ENCODE measurements at regions of chr14 and their contacts with region 1.

Region 1: DNA sequence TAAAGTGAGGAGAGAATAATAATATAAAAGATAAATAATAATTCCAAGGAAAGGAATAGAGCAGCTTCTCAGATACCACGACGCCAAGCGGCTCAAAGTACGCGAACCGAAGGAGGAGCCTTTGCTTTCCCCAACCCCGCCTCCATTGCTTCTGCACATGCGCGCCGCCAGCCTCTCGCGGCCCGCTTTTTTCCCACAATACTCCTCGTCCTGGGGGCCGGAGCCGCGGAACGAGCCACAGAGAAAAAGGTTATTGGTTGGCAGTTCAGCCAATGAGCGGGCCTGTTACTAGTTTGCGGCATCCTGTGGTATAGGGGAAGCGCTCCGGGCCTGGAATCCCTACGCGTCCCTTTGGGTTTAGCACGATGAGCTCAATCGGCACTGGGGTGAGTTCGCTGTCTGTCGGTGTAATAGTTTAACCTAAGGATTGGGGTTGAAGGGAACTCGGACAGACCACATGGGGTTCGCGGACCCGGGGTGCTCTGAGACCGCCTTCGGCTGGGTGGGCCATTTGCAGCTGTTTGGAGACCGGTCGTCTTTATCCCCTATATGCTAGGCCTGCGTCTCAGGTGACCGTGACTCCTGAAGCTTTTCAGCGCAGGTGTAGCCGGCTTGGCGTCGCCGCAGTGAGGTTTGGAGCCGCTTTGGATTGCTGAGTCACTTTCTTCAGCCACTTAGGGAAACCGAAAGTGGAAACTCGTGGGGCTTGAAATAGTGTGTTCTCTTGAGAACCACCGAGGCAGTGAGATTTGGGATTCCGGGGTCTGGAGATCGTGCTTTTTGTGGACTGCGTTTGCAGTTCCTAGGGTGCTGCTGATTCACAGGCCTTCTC is at the start of gene PSMA3:
- DNase-seq: peak; percentile 97 to 98
- H3K4me3 ChIP-seq: peak within 1 kb of the TSS; percentile 96
- H3K4me3 Mint-ChIP-seq: peak within 1 kb of the TSS; percentile 96
- H3K27ac Mint-ChIP-seq: peak within 1 kb of the TSS; percentile 99
- H3K4me1 ChIP-seq: peaks cover 21% of the 10 kb centered on the region; the same call in 1 of the 2 replicates
- H3K4me1 Mint-ChIP-seq: peaks cover 9% of the 10 kb centered on the region
- H3K27me3 ChIP-seq: no peaks in the 10 kb centered on the region
- H3K27me3 Mint-ChIP-seq: no peaks in the 10 kb centered on the region
- CTCF ChIP-seq: no peak
- total RNA-seq, gene PSMA3: 334 and 352 TPM in 2 replicates

Region 2: DNA sequence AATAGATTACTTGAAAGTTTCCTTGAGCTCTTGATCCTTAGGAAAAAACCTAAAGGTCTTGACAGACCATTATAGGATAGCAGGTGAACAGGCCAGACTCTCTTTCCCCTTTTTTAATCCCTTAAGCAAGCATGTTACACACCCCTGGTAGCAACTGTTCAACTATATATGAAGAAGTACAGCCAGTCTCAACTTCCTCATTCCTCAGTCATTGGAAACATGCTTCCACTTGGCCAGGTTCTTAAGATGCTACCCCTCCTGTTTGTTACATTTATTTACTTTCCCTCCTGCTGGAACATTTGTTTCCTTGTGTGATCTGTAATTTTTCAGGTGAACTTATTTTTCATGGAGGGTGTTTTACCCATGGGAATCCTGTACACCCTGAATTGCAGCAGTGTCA is 216.9 kb before region 1 on chr14:
- CTCF ChIA-PET with region 1: no interaction called
- POLR2A ChIA-PET with region 1: no interaction called
- intact Hi-C with region 1: no loop called
- DNase-seq: no peak
- H3K4me3 ChIP-seq: no peak overlapping the region
- H3K4me3 Mint-ChIP-seq: no peak overlapping the region
- H3K27ac Mint-ChIP-seq: no peak overlapping the region
- H3K4me1 ChIP-seq: no peaks in the 10 kb centered on the region
- H3K4me1 Mint-ChIP-seq: no peaks in the 10 kb centered on the region
- H3K27me3 ChIP-seq: no peaks in the 10 kb centered on the region
- H3K27me3 Mint-ChIP-seq: no peaks in the 10 kb centered on the region
- CTCF ChIP-seq: no peak

Region 3: GRCh38 chr14:58189176-58189575 is 55.6 kb before region 1 on chr14:
- CTCF ChIA-PET with region 1: no interaction called
- POLR2A ChIA-PET with region 1: no interaction called
- intact Hi-C with region 1: no loop called
- DNase-seq: no peak
- H3K4me3 ChIP-seq: no peak overlapping the region
- H3K4me3 Mint-ChIP-seq: no peak overlapping the region
- H3K27ac Mint-ChIP-seq: no peak overlapping the region
- H3K4me1 ChIP-seq: peaks cover 8% of the 10 kb centered on the region; the same call in 1 of the 2 replicates
- H3K4me1 Mint-ChIP-seq: no peaks in the 10 kb centered on the region
- H3K27me3 ChIP-seq: no peaks in the 10 kb centered on the region
- H3K27me3 Mint-ChIP-seq: peaks cover 4% of the 10 kb centered on the region
- CTCF ChIP-seq: no peak

Region 4: GRCh38 chr14:58199726-58200479 is 44.9 kb before region 1 on chr14 and contains the start of gene ACTR10:
- CTCF ChIA-PET with region 1: no interaction called
- POLR2A ChIA-PET with region 1: interaction called, 3 read pairs
- intact Hi-C with region 1: loop called (anchors 5 kb)
- DNase-seq: peak; percentile 92 to 93
- H3K4me3 ChIP-seq: peak within 1 kb of the TSS; percentile 96
- H3K4me3 Mint-ChIP-seq: peak within 1 kb of the TSS; percentile 89
- H3K27ac Mint-ChIP-seq: peak within 1 kb of the TSS; percentile 90
- H3K4me1 ChIP-seq: no peaks in the 10 kb centered on the region
- H3K4me1 Mint-ChIP-seq: peaks cover 12% of the 10 kb centered on the region
- H3K27me3 ChIP-seq: no peaks in the 10 kb centered on the region
- H3K27me3 Mint-ChIP-seq: no peaks in the 10 kb centered on the region
- CTCF ChIP-seq: no peak
- total RNA-seq, gene ACTR10: 49.0 and 50.1 TPM in 2 replicates

Region 5: GRCh38 chr14:58513272-58513671 is 268.5 kb after region 1 on chr14:
- CTCF ChIA-PET with region 1: no interaction called
- POLR2A ChIA-PET with region 1: no interaction called
- intact Hi-C with region 1: no loop called
- DNase-seq: no peak
- H3K4me3 ChIP-seq: no peak overlapping the region
- H3K4me3 Mint-ChIP-seq: no peak overlapping the region
- H3K27ac Mint-ChIP-seq: no peak overlapping the region
- H3K4me1 ChIP-seq: no peaks in the 10 kb centered on the region
- H3K4me1 Mint-ChIP-seq: no peaks in the 10 kb centered on the region
- H3K27me3 ChIP-seq: no peaks in the 10 kb centered on the region
- H3K27me3 Mint-ChIP-seq: no peaks in the 10 kb centered on the region
- CTCF ChIP-seq: no peak

Measured in Caco-2 (cell line).